HAP-1 (cell line): ENCODE measurements at regions of chr6 and their contacts with region 1.

Region 1: DNA sequence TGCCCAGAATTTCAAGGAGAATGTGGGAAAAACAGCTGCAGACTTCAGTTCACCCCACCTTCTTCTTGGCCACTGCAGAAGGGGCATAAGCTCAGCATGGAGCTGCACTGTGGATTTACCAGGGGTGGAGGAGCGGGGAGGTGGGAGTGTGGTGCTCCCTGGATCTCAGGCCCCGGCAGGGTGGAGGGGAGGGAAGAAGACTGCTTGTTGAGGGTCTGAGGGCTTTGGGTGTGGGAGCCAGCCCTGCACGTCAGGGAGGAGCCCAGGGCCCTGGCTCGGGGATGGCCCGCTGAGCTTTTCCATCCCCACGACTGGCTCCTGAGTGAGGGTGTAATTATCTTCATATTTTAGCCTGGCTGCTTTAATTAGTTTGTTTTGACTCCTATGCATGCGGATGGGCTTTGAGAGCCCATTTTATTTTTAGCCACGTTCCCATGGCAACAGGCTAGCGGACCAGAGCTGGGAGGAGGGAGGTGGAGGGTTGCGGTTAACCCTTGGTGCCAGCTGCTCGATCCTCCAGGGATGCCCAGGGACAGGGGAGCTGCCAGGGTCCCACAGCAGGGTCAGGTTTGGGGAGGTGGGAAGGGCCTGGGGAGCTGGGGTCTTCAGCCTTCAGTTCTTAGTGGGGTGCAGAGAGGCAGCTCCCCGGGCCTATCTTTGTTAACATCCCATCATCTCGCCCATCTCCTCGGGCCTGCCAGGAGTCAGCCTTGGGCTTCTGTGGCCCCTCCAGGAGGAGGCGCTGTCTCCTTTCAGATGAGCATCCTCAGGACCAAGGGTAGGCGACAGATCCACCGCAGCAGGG is 68.2 kb downstream of the RAB44 start:
- DNase-seq: peak; percentile 60 to 90
- H3K4me3 ChIP-seq: no peak overlapping the region
- H3K4me1 ChIP-seq: no peaks in the 10 kb centered on the region
- H3K27me3 ChIP-seq: no peaks in the 10 kb centered on the region

Region 2: DNA sequence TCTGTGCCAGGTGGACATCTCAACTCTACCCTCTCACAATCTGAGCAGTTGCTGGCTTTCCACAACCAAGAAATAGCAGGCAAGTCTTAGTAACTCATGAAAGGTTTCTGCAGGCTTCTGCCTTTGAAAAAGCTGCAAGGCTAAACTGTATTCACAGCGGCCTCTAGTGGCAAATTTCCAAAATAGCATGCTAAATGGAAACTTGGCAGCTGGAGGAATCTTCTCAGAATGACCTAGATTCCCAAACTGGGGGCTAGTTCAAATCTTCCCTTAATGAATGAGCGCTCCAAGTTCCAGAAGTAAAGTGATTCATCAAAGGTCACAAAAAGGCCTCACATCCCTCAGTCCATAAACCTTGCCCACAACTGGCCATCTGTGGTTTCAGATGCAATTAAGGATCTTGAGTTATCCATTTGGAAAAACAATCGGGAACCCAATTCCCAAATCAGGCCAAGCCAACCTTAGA is 85.4 kb after region 1 on chr6:
- in situ Hi-C with region 1: loop called (anchors 5 kb)
- DNase-seq: peak; percentile 35 to 63
- H3K4me3 ChIP-seq: no peak overlapping the region
- H3K4me1 ChIP-seq: peaks cover 9% of the 10 kb centered on the region
- H3K27me3 ChIP-seq: no peaks in the 10 kb centered on the region

Region 3: GRCh38 chr6:37018198-37019064 is 252.6 kb after region 1 on chr6:
- in situ Hi-C with region 1: loop called (anchors 5 kb)
- DNase-seq: peak; percentile 89 to 94
- H3K4me3 ChIP-seq: no peak overlapping the region
- H3K4me1 ChIP-seq: peaks cover 6% of the 10 kb centered on the region; the same call in 1 of the 2 replicates
- H3K27me3 ChIP-seq: no peaks in the 10 kb centered on the region

Region 4: DNA sequence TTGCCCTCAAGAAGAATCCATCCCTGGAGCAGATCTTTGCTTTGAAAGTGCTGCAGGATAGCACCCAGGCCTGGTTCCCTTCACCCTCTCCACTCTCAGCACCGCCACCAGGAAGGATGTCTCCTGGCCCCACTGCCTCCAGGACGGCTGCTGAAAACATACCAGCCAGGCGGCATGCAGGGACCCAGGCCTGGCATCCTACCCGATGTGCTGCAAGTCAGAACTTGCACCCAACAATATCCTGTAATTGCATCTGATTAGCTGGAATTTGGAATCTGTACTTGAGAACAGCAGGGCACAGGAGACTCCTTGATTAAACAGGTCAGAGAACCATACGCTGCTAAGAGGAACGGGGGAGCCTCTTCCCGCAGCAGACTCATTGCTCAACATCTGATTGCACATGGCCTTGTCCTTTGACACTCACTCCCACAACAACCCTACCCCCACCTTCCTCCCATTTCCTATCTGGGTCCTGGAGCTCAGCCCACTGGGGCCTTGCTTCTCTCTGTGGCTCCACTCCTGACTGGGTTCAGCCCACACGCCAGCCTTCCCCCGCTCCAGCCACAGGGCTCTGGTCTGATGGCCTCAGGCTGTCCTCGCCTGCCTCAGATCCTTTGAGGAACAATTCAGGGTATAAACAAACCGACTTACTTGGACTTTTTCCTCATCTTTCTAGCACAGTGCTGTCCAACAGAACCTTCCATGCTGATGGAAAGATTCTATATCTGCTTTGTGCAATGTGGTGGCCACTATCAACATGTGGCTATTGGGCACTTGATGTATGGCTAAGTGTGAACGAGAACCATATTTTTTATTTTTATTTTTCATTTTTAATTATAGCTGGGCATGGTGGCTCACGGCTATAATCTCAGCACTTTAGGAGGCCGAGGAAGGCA is 317.7 kb after region 1 on chr6:
- in situ Hi-C with region 1: no loop called
- DNase-seq: no peak
- H3K4me3 ChIP-seq: no peak overlapping the region
- H3K4me1 ChIP-seq: no peaks in the 10 kb centered on the region
- H3K27me3 ChIP-seq: no peaks in the 10 kb centered on the region

Region 5: DNA sequence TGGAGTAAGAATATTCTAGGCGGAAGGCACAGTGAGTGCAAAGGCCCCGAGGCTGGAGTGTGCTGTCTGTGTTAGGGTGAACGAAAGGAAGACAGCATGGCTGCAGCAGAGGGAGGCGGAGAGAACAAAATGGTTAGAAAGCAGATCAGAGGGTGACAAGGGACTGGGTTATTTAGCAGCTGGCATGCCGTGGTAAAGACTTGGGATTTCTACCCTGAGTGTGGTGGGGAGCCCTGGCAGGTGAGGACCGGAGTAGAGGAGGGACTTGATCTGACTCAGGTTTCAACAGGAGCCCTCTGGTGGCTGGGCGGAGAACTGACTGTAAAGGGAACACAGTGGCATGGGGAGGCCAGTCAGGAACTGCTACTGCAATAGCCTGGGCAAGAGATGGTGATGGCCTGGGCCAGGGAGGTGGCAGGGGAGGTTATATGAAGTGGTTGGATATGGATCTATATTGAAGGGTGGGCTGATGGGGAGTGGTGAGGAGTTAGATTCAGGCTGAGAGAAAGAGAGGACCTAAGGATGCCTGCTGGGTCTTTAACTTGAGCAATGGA is 442.2 kb after region 1 on chr6:
- in situ Hi-C with region 1: loop called (anchors 5 kb)
- DNase-seq: peak; percentile 70 to 92
- H3K4me3 ChIP-seq: no peak overlapping the region
- H3K4me1 ChIP-seq: no peaks in the 10 kb centered on the region
- H3K27me3 ChIP-seq: no peaks in the 10 kb centered on the region